ENCODE measurements at regions of chr10 and their contacts with region 1.

Region 1: GRCh38 chr10:84537447-84537931 is 209.1 kb downstream of the CCSER2 start:
- DNase-seq: peak; percentile 74
- CTCF ChIP-seq: peak; percentile 29

Region 2: GRCh38 chr10:84018826-84019225 is 518.7 kb before region 1 on chr10:
- CTCF ChIA-PET with region 1: no interaction called
- POLR2A ChIA-PET with region 1: no interaction called
- DNase-seq: no peak
- CTCF ChIP-seq: no peak

Region 3: DNA sequence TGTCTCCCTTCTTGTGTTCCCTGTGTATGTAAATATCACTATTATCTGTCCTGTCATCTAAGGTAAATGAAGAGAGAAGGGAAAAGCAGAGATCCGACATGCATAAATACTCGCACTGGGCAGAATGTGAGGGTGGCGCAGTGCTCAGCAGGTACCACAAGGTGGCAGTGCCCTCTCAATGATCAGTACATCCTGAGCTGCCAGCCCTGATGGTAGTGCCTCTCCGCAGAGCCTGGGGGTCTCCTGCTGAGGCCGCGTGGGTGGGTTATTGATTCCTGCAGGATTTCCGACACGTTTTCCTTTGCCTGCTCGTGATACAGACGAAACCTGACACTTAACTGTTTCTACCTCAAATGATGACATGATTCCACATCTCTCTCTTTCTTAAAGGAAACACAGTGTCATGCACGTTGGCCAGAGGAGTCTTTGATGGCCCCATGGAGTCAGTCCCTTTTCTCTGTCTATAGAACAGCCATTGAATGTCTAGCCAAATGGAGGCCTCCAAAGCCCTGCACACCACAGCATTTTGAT is 272.8 kb before region 1 on chr10:
- CTCF ChIA-PET with region 1: interaction called, 326 read pairs
- POLR2A ChIA-PET with region 1: no interaction called
- DNase-seq: peak; percentile 74
- CTCF ChIP-seq: peak; percentile 98

Region 4: GRCh38 chr10:84360637-84361365 is 176.7 kb before region 1 on chr10:
- CTCF ChIA-PET with region 1: interaction called, 48 read pairs
- POLR2A ChIA-PET with region 1: no interaction called
- DNase-seq: no peak
- CTCF ChIP-seq: no peak

Region 5: GRCh38 chr10:84429926-84430520 is 107.5 kb before region 1 on chr10:
- CTCF ChIA-PET with region 1: interaction called, 64 read pairs
- POLR2A ChIA-PET with region 1: no interaction called
- DNase-seq: peak; percentile 52
- CTCF ChIP-seq: peak; percentile 62

Region 6: GRCh38 chr10:84525120-84525806 is 12.2 kb before region 1 on chr10:
- CTCF ChIA-PET with region 1: interaction called, 23 read pairs
- POLR2A ChIA-PET with region 1: no interaction called
- DNase-seq: no peak
- CTCF ChIP-seq: no peak